CD4-positive, alpha-beta memory T cell (primary cell): ENCODE measurements at regions of chr2 and their contacts with region 1.

Region 1: GRCh38 chr2:140337061-140337460 is 1556.9 kb upstream of the NXPH2 start:
- DNase-seq: no peak
- H3K4me3 ChIP-seq: no peak overlapping the region
- H3K4me3 Mint-ChIP-seq: no peak overlapping the region
- H3K27ac ChIP-seq: no peak overlapping the region
- H3K27ac Mint-ChIP-seq: no peak overlapping the region
- H3K4me1 ChIP-seq: no peaks in the 10 kb centered on the region
- H3K4me1 Mint-ChIP-seq: peaks cover 0 to 1% (median 0%) of the 10 kb centered on the region in 4 donors
- H3K27me3 ChIP-seq: no peaks in the 10 kb centered on the region
- H3K27me3 Mint-ChIP-seq: no peaks in the 10 kb centered on the region

Region 2: DNA sequence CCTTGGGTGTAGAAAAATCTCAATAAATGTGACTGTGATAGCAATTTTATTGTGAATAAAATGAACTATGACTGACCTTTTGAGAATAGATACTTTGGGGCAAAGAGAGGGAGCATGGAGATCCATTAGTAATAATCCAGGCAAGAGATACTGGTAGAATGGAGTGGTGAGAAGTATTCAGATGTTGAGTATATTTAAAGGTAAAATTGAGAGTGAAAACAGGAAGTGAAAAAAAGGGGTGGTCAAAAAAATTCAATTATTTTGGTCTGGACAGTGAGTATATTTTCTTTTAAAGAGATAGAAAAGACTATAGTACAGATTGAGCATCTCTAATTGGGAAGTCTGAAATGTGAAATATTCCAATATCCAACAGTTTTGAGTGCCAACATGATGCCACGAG is 41.3 kb before region 1 on chr2:
- CTCF ChIA-PET with region 1: no interaction called
- POLR2A ChIA-PET with region 1: no interaction called
- intact Hi-C with region 1: loop called (anchors 1 kb)
- DNase-seq: no peak
- H3K4me3 ChIP-seq: no peak overlapping the region
- H3K4me3 Mint-ChIP-seq: no peak overlapping the region
- H3K27ac ChIP-seq: no peak overlapping the region
- H3K27ac Mint-ChIP-seq: no peak overlapping the region
- H3K4me1 ChIP-seq: no peaks in the 10 kb centered on the region
- H3K4me1 Mint-ChIP-seq: no peaks in the 10 kb centered on the region
- H3K27me3 ChIP-seq: no peaks in the 10 kb centered on the region
- H3K27me3 Mint-ChIP-seq: no peaks in the 10 kb centered on the region

Region 3: GRCh38 chr2:140308706-140309105 is 28.4 kb before region 1 on chr2:
- CTCF ChIA-PET with region 1: no interaction called
- POLR2A ChIA-PET with region 1: no interaction called
- intact Hi-C with region 1: no loop called
- DNase-seq: no peak
- H3K4me3 ChIP-seq: no peak overlapping the region
- H3K4me3 Mint-ChIP-seq: no peak overlapping the region
- H3K27ac ChIP-seq: no peak overlapping the region
- H3K27ac Mint-ChIP-seq: no peak overlapping the region
- H3K4me1 ChIP-seq: no peaks in the 10 kb centered on the region
- H3K4me1 Mint-ChIP-seq: no peaks in the 10 kb centered on the region
- H3K27me3 ChIP-seq: no peaks in the 10 kb centered on the region
- H3K27me3 Mint-ChIP-seq: no peaks in the 10 kb centered on the region